ENCODE measurements at regions of chr22 and their contacts with region 1.

Region 1: GRCh38 chr22:36065775-36066559 is 37.3 kb upstream of the RBFOX2 start:
- DNase-seq: peak; percentile 87 to 92
- ATAC-seq: peak; percentile 88 to 96 (median 95)
- H3K4me3 ChIP-seq: peak overlapping the region; percentile 30 to 73 (median 57)
- H3K27ac ChIP-seq: peak overlapping the region; percentile 66 to 93 (median 86)
- H3K4me1 ChIP-seq: peaks cover 0 to 19% (median 7%) of the 10 kb centered on the region in 9 donors
- H3K27me3 ChIP-seq: no peaks in the 10 kb centered on the region
- CTCF ChIP-seq: peak; percentile 99 to 100 (median 100)

Region 2: GRCh38 chr22:35930933-35931332 is 135.0 kb before region 1 on chr22:
- intact Hi-C with region 1: loop called (anchors 1 to 10 kb)
- DNase-seq: peak in 1 of 2 donors; percentile 62
- ATAC-seq: peak; percentile 81 to 98 (median 95)
- H3K4me3 ChIP-seq: no peak overlapping the region
- H3K27ac ChIP-seq: no peak overlapping the region
- H3K4me1 ChIP-seq: peaks cover 0 to 17% (median 5%) of the 10 kb centered on the region in 9 donors
- H3K27me3 ChIP-seq: no peaks in the 10 kb centered on the region
- CTCF ChIP-seq: peak; percentile 44 to 88 (median 73)

Region 3: DNA sequence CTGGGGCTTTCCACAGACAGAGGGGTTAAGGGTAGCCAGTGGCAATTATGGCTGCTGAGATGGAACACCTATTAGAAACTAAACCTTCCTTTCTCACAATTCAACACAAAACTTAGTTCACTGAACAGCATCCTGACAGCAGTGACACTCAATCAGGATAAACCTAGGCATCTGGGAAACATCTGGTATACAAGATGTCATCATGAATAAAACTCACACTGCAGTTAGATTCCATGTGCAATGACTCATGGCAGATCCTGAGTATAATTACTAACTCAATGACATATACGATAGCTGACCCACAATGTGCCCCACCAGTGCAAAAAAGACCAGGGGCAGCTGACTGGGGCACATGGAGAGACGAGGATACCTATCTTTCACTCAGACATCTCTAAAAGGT is 55.1 kb before region 1 on chr22:
- intact Hi-C with region 1: no loop called
- DNase-seq: no peak
- ATAC-seq: peak in 7 of 8 donors; percentile 36 to 84 (median 50)
- H3K4me3 ChIP-seq: no peak overlapping the region
- H3K27ac ChIP-seq: peak overlapping the region in 1 of 10 donors; percentile 6
- H3K4me1 ChIP-seq: peaks cover 2 to 85% (median 41%) of the 10 kb centered on the region in 9 donors
- H3K27me3 ChIP-seq: no peaks in the 10 kb centered on the region
- CTCF ChIP-seq: no peak